ENCODE measurements at regions of chr20 and their contacts with region 1.

Region 1: GRCh38 chr20:40962730-40963504 is 65.7 kb upstream of the TOP1 start:
- DNase-seq: peak; percentile 54 to 76
- H3K4me3 ChIP-seq: no peak overlapping the region
- H3K27ac ChIP-seq: no peak overlapping the region
- H3K4me1 ChIP-seq: no peaks in the 10 kb centered on the region
- H3K27me3 ChIP-seq: peaks cover 7% of the 10 kb centered on the region; the same call in 1 of the 2 replicates
- CTCF ChIP-seq: peak; percentile 98

Region 2: GRCh38 chr20:39049684-39050554 is 1913.0 kb before region 1 on chr20:
- CTCF ChIA-PET with region 1: interaction called, 3 read pairs
- POLR2A ChIA-PET with region 1: no interaction called
- intact Hi-C with region 1: loop called (anchors 2 kb)
- DNase-seq: peak in 1 of 2 experiments; percentile 75
- H3K4me3 ChIP-seq: peak overlapping the region; percentile 97
- H3K27ac ChIP-seq: no peak overlapping the region
- H3K4me1 ChIP-seq: 0 out of 2 replicates have a peak, but pooled peaks cover 6% of the 10 kb centered on the region
- H3K27me3 ChIP-seq: peaks cover 20% of the 10 kb centered on the region; the same call in 1 of the 2 replicates
- CTCF ChIP-seq: peak; percentile 96

Region 3: GRCh38 chr20:39264506-39265172 is 1698.3 kb before region 1 on chr20:
- CTCF ChIA-PET with region 1: interaction called, 4 read pairs
- POLR2A ChIA-PET with region 1: no interaction called
- intact Hi-C with region 1: loop called (anchors 2 kb)
- DNase-seq: peak; percentile 43 to 49
- H3K4me3 ChIP-seq: no peak overlapping the region
- H3K27ac ChIP-seq: no peak overlapping the region
- H3K4me1 ChIP-seq: no peaks in the 10 kb centered on the region
- H3K27me3 ChIP-seq: peaks cover 27% of the 10 kb centered on the region
- CTCF ChIP-seq: peak; percentile 95

Region 4: GRCh38 chr20:40265825-40266533 is 696.9 kb before region 1 on chr20:
- CTCF ChIA-PET with region 1: no interaction called
- POLR2A ChIA-PET with region 1: no interaction called
- intact Hi-C with region 1: loop called (anchors 2 kb)
- DNase-seq: peak in 1 of 2 experiments; percentile 4
- H3K4me3 ChIP-seq: no peak overlapping the region
- H3K27ac ChIP-seq: no peak overlapping the region
- H3K4me1 ChIP-seq: no peaks in the 10 kb centered on the region
- H3K27me3 ChIP-seq: peaks cover 14% of the 10 kb centered on the region; the same call in 1 of the 2 replicates
- CTCF ChIP-seq: peak; percentile 63

Region 5: DNA sequence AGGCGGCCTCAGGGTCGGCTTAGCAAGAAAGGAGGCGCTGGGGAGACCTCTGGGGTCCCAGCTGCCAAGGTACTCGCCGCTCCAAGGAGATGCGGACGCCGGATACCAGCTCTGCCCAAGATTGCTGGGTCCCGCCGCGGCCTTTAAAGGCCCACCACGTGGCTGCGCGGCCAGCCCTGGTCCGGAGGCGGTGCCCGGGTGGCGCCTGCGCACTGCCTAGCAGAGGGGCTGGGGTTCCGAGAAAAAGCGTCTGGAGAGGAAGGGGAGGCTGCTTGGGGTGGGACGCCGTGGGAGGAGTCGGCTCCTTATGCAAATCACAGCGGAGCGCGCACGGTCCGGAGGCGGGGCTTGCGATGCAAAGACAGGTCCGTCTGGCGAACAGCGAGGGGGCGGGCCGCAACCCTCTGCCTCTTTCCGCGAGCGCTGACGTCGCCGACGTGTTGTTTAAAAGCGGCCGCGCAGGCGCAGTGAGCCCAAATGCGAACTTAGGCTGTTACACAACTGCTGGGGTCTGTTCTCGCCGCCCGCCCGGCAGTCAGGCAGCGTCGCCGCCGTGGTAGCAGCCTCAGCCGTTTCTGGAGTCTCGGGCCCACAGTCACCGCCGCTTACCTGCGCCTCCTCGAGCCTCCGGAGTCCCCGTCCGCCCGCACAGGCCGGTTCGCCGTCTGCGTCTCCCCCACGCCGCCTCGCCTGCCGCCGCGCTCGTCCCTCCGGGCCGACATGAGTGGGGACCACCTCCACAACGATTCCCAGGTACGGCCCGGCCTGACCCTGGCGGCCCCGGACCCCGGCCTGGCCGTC is 65.6 kb after region 1 on chr20 and contains the start of gene TOP1:
- CTCF ChIA-PET with region 1: interaction called, 4 read pairs
- POLR2A ChIA-PET with region 1: no interaction called
- intact Hi-C with region 1: loop called (anchors 2 kb)
- DNase-seq: peak; percentile 98 to 100
- H3K4me3 ChIP-seq: peak within 1 kb of the TSS; percentile 90
- H3K27ac ChIP-seq: peak within 1 kb of the TSS; percentile 90
- H3K4me1 ChIP-seq: peaks cover 44% of the 10 kb centered on the region
- H3K27me3 ChIP-seq: no peaks in the 10 kb centered on the region
- CTCF ChIP-seq: no peak
- total RNA-seq, gene TOP1: 39.1 and 55.8 TPM in 2 replicates

Region 6: DNA sequence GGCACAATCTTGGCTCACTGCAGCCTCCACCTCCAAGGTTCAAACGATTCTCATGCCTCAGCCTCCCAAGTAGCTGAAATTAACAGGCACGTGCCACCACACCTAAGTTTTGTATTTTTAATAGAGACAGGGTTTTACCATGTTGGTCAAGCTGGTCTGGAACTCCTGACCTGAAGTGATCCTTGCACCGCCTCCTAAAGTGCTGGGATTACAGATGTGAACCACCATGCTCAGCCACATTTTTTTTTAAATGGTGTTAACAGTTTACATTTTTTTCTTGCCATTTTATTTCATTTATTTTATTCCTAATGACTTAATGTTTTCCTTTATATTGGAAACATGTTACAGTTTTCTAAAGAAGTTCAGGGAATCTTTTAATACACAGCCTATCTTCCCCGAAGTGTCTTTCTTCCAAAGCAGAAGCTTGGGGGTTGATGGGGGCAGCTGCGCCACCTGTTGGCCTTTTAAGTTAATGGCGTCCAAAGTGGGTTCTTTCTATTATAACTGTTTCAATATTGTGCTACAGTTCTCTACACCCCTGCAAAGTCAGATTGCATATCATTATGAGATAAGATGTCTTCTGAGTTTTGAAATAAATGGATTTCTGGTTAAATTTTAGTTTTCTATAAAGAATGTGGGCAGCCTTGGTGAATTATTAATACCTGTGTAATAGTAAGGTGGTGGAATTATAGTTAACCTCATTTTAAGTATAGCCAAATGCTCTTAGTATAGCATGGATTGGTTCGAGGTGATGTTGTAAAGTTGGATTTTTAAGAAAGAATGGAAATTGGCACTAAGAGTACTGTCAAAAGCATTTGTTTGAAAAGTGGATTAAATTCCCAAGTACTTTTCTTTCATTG is 132.4 kb after region 1 on chr20:
- CTCF ChIA-PET with region 1: interaction called, 3 read pairs
- POLR2A ChIA-PET with region 1: no interaction called
- intact Hi-C with region 1: loop called (anchors 1 kb)
- DNase-seq: peak; percentile 49 to 50
- H3K4me3 ChIP-seq: no peak overlapping the region
- H3K27ac ChIP-seq: no peak overlapping the region
- H3K4me1 ChIP-seq: no peaks in the 10 kb centered on the region
- H3K27me3 ChIP-seq: no peaks in the 10 kb centered on the region
- CTCF ChIP-seq: peak; percentile 98

Region 7: DNA sequence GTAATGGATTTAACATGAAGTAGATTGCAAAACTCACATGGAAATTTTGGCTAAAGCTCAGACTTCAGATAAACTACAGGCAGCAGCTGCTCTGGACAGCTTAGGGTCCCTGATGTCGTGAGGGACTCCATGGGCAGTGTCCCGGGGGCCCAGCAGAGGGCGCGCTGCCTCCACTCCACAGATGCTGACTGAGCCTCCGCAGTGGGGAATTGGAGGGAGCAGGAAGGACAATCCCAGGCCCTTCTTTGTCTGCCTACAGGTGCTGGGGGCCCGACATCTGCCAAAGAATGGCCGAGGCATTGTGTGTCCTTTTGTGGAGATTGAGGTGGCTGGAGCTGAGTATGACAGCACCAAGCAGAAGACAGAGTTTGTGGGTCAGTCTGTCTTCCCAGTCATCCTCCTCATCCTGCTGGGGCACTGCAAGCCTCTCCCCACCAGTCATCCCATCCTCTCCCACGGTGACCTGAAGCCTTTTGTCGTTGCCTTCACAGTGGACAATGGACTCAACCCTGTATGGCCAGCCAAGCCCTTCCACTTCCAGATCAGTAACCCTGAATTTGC is 210.3 kb after region 1 on chr20:
- CTCF ChIA-PET with region 1: no interaction called
- POLR2A ChIA-PET with region 1: no interaction called
- intact Hi-C with region 1: loop called (anchors 1 kb)
- DNase-seq: peak; percentile 45 to 74
- H3K4me3 ChIP-seq: no peak overlapping the region
- H3K27ac ChIP-seq: no peak overlapping the region
- H3K4me1 ChIP-seq: peaks cover 11% of the 10 kb centered on the region
- H3K27me3 ChIP-seq: no peaks in the 10 kb centered on the region
- CTCF ChIP-seq: peak; percentile 98

Measured in PC-9 (cell line).